OCI-LY7 (cell line): ENCODE measurements at regions of chr2 and their contacts with region 1.

Region 1: DNA sequence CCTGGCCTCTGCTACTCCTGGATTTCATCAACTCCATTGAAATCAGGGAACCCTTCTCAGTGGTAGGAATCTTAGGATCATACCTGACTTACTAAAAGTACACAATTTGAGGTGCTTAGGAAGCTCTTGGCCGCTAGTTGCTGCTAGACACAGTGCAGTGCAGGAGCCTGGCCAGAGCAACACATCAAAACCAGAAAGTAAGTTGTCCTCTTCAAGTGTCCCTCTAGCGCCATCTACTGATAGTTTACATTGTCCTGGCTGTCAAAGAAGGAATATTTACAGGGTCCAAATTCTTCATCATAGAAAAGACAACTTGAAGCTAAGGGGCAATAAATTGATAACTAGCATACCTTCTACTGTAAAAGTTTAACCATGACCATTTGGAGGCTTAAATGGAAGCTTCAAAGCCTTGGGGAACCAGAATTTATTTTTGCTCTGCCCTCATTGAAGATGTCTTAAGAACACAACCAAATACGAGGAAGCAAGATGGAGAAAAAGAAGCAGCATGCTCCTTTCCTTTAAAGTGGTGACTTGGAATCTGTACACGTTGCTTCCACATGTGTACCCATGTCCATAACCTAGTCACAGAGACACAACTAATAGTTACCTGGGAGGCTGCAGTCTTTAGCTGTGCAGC is 889.1 kb upstream of the GCFC2 start:
- DNase-seq: peak; percentile 81
- H3K4me3 ChIP-seq: no peak overlapping the region
- H3K27ac ChIP-seq: no peak overlapping the region
- H3K4me1 ChIP-seq: no peaks in the 10 kb centered on the region
- CTCF ChIP-seq: peak; percentile 91

Region 2: DNA sequence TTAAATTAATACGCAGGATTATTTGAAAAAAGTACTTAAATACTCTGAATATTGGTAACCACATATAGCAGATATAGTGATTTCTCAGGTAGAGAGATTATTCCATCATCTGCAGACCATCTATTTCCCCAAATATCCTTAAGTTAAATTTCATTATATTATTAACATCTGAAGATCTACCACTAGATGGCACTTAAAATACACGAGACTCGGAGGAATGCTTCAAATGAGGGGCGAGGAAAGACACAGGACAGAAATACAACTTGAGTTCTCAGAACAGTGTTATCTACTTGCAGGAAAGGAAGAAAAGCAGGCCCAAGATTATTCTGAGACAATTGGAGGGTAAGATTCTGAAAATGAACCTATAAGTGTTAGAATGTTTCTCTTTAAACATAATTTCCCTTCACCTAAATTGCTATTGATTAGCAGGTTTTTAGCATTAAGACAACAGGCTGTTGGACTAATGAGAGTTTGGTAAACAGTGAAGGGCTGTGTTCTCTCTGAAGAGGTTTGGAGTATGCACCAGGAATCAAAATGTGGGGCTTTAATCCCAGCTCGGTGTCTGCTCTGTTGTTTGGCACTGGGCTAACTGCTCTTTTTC is 812.2 kb before region 1 on chr2:
- CTCF ChIA-PET with region 1: no interaction called
- POLR2A ChIA-PET with region 1: no interaction called
- intact Hi-C with region 1: loop called (anchors 5 kb)
- DNase-seq: peak; percentile 47
- H3K4me3 ChIP-seq: no peak overlapping the region
- H3K27ac ChIP-seq: no peak overlapping the region
- H3K4me1 ChIP-seq: no peaks in the 10 kb centered on the region
- CTCF ChIP-seq: peak; percentile 81